Heart left ventricle (tissue), 16 donors: ENCODE measurements at regions of chr6 and their contacts with region 1.

Region 1: DNA sequence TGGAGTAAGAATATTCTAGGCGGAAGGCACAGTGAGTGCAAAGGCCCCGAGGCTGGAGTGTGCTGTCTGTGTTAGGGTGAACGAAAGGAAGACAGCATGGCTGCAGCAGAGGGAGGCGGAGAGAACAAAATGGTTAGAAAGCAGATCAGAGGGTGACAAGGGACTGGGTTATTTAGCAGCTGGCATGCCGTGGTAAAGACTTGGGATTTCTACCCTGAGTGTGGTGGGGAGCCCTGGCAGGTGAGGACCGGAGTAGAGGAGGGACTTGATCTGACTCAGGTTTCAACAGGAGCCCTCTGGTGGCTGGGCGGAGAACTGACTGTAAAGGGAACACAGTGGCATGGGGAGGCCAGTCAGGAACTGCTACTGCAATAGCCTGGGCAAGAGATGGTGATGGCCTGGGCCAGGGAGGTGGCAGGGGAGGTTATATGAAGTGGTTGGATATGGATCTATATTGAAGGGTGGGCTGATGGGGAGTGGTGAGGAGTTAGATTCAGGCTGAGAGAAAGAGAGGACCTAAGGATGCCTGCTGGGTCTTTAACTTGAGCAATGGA is 38.0 kb downstream of the PIM1 start:
- DNase-seq: peak; percentile 64 to 91 (median 80)
- ATAC-seq: peak in 3 of 4 donors; percentile 70 to 82 (median 70)
- H3K4me3 ChIP-seq: no peak overlapping the region
- H3K27ac ChIP-seq: peak overlapping the region in 1 of 12 donors; percentile 51
- H3K4me1 ChIP-seq: peaks cover 0 to 56% (median 0%) of the 10 kb centered on the region in 12 donors
- H3K27me3 ChIP-seq: no peaks in the 10 kb centered on the region
- CTCF ChIP-seq: peak; percentile 47 to 77 (median 60)
- POLR2A ChIP-seq: no peak

Region 2: GRCh38 chr6:36885461-36886401 is 322.2 kb before region 1 on chr6 and contains the start of gene C6orf89:
- intact Hi-C with region 1: loop called in 7 of 10 experiments (anchors 5 to 10 kb)
- DNase-seq: peak; percentile 97 to 99 (median 98)
- ATAC-seq: peak; percentile 99 to 100 (median 100)
- H3K4me3 ChIP-seq: peak within 1 kb of the TSS; percentile 52 to 93 (median 83)
- H3K27ac ChIP-seq: peak within 1 kb of the TSS; percentile 77 to 95 (median 88)
- H3K4me1 ChIP-seq: peaks cover 0 to 42% (median 26%) of the 10 kb centered on the region in 12 donors
- H3K27me3 ChIP-seq: no peaks in the 10 kb centered on the region
- CTCF ChIP-seq: peak; percentile 73 to 94 (median 87)
- POLR2A ChIP-seq: peak in 1 of 2 donors; percentile 75
- total RNA-seq, gene C6orf89: 54.2 to 86.2 (median 75.5) TPM

Region 3: GRCh38 chr6:36897609-36898008 is 310.4 kb before region 1 on chr6:
- intact Hi-C with region 1: loop called in 2 of 10 experiments (anchors 5 to 10 kb)
- DNase-seq: no peak
- ATAC-seq: peak in 3 of 4 donors; percentile 49 to 62 (median 54)
- H3K4me3 ChIP-seq: no peak overlapping the region
- H3K27ac ChIP-seq: no peak overlapping the region
- H3K4me1 ChIP-seq: peaks cover 0 to 6% (median 0%) of the 10 kb centered on the region in 12 donors
- H3K27me3 ChIP-seq: no peaks in the 10 kb centered on the region
- CTCF ChIP-seq: peak in 9 of 12 donors; percentile 8 to 42 (median 21)
- POLR2A ChIP-seq: no peak

Region 4: DNA sequence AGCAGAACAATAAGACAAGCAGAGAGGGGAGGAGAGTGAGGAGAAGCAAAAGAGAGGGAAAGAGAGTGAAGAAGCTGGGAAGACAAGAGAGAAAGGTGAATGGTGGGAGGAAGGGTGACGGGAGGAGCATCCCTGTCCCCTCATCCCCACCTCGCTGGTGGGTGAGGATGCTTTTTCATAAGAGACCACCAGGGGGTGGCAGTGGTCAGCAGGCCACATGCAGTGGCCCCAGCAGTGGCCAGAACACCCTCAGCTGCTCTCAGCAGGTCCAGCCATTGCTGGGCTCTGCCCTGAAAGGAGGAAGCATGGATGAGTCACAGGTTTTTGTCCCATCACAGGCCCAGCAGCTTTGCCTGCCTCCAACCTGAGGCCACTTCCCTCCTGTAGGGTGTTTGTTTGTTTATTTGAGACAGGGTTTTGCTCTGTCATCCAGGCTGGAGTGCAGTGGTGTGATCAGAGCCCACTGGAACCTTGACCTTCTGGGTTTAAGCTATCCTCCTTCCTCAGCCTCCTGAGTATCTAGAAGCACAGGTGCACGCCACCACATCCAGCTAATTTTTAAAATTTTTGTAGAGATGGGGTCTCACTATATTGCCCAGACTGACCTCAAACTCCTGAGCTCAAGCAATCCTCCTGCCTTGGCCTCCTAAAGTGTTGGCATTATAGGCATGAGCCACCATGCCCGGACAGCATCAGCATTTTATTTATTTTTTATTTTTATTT is 178.6 kb before region 1 on chr6:
- intact Hi-C with region 1: loop called in 6 of 10 experiments (anchors 1 to 10 kb)
- DNase-seq: peak; percentile 69 to 87 (median 82)
- ATAC-seq: peak; percentile 84 to 96 (median 95)
- H3K4me3 ChIP-seq: no peak overlapping the region
- H3K27ac ChIP-seq: peak overlapping the region in 1 of 12 donors; percentile 47
- H3K4me1 ChIP-seq: peaks cover 0 to 21% (median 0%) of the 10 kb centered on the region in 12 donors
- H3K27me3 ChIP-seq: no peaks in the 10 kb centered on the region
- CTCF ChIP-seq: peak; percentile 65 to 89 (median 78)
- POLR2A ChIP-seq: peak in 1 of 2 donors; percentile 16

Region 5: GRCh38 chr6:37051138-37052026 is 156.6 kb before region 1 on chr6:
- intact Hi-C with region 1: loop called in 1 of 10 experiments (anchors 1 kb)
- DNase-seq: peak; percentile 89 to 95 (median 90)
- ATAC-seq: peak; percentile 41 to 86 (median 81)
- H3K4me3 ChIP-seq: peak overlapping the region in 1 of 12 donors; percentile 36
- H3K27ac ChIP-seq: peak overlapping the region in 2 of 12 donors; percentile 32 to 93
- H3K4me1 ChIP-seq: peaks cover 0 to 55% (median 14%) of the 10 kb centered on the region in 12 donors
- H3K27me3 ChIP-seq: no peaks in the 10 kb centered on the region
- CTCF ChIP-seq: peak; percentile 82 to 96 (median 90)
- POLR2A ChIP-seq: no peak